CD4-positive, alpha-beta memory T cell (primary cell): ENCODE measurements at regions of chr3 and their contacts with region 1.

Region 1: GRCh38 chr3:71512000-71512399 is 71.5 kb downstream of the FOXP1 start:
- DNase-seq: peak; percentile 63 to 67 (median 65)
- H3K4me3 ChIP-seq: no peak overlapping the region
- H3K4me3 Mint-ChIP-seq: peak overlapping the region in 1 of 8 donors; percentile 35
- H3K27ac ChIP-seq: no peak overlapping the region
- H3K27ac Mint-ChIP-seq: peak overlapping the region; percentile 67 to 92 (median 85)
- H3K4me1 ChIP-seq: peaks cover 27% of the 10 kb centered on the region
- H3K4me1 Mint-ChIP-seq: peaks cover 7 to 17% (median 14%) of the 10 kb centered on the region in 4 donors
- H3K27me3 ChIP-seq: no peaks in the 10 kb centered on the region
- H3K27me3 Mint-ChIP-seq: no peaks in the 10 kb centered on the region

Region 2: DNA sequence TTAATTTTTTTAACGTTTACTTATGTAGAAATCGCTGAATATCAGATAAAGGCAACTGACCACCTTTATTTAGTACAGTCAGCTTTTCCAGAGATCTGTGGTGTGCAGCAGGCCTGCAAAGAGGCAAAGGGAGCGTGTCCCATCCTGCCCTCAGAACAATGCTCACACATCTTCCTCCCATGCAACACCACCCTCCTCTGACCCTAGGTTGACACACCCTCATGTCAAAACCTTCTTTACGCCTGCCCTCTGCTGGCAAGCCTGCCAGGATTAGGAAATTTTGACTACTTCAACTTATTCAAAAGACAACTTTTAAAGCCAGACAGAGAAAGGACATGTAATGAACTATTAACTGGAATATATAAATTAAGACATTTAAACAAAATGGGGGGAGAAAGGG is 442.2 kb before region 1 on chr3:
- CTCF ChIA-PET with region 1: interaction called, 4 read pairs
- POLR2A ChIA-PET with region 1: no interaction called
- intact Hi-C with region 1: loop called (anchors 1 kb)
- DNase-seq: peak; percentile 65 to 81 (median 68)
- H3K4me3 ChIP-seq: no peak overlapping the region
- H3K4me3 Mint-ChIP-seq: peak overlapping the region in 5 of 8 donors; percentile 6 to 63 (median 16)
- H3K27ac ChIP-seq: no peak overlapping the region
- H3K27ac Mint-ChIP-seq: peak overlapping the region in 6 of 7 donors; percentile 67 to 96 (median 80)
- H3K4me1 ChIP-seq: peaks cover 69% of the 10 kb centered on the region
- H3K4me1 Mint-ChIP-seq: peaks cover 49 to 80% (median 66%) of the 10 kb centered on the region in 4 donors
- H3K27me3 ChIP-seq: no peaks in the 10 kb centered on the region
- H3K27me3 Mint-ChIP-seq: no peaks in the 10 kb centered on the region

Region 3: DNA sequence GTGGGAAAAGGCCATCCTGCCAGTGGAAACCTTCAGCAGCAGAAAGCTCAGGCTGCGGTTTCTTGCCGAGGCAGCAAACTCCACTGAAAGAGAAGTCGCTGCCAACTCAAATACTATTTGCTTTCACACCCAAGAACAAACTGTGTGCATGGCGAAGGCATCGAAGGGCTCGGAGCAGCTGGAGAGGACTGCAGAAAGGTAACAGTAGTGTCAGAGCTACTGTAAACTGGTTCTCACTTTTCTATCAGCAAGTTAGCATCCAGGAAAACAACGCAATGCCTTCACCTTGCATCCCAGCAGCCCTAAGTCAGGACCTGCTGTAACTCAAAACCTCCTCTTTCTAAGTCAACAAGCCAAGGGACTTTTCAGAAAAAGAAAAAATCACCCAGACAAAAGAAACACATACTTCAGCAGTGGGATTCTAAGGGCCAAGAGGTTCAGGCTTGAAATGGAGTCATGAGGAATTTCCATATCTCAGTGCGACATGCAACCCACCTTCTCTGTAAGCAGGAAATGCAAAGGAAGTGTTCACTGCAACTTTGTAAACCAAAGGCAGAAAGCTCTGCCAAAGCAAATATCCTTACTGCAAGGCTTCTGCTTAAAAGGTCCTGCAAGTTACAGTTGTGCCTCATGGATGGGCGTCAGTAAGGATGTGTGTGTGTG is 122.0 kb before region 1 on chr3:
- CTCF ChIA-PET with region 1: no interaction called
- POLR2A ChIA-PET with region 1: no interaction called
- intact Hi-C with region 1: loop called (anchors 5 kb)
- DNase-seq: peak in 4 of 5 donors; percentile 6 to 43 (median 16)
- H3K4me3 ChIP-seq: peak overlapping the region in 1 of 2 donors; percentile 42
- H3K4me3 Mint-ChIP-seq: peak overlapping the region; percentile 73 to 87 (median 76)
- H3K27ac ChIP-seq: peak overlapping the region; percentile 30
- H3K27ac Mint-ChIP-seq: peak overlapping the region; percentile 74 to 96 (median 86)
- H3K4me1 ChIP-seq: peaks cover 64% of the 10 kb centered on the region
- H3K4me1 Mint-ChIP-seq: peaks cover 41 to 72% (median 55%) of the 10 kb centered on the region in 4 donors
- H3K27me3 ChIP-seq: no peaks in the 10 kb centered on the region
- H3K27me3 Mint-ChIP-seq: no peaks in the 10 kb centered on the region

Region 4: DNA sequence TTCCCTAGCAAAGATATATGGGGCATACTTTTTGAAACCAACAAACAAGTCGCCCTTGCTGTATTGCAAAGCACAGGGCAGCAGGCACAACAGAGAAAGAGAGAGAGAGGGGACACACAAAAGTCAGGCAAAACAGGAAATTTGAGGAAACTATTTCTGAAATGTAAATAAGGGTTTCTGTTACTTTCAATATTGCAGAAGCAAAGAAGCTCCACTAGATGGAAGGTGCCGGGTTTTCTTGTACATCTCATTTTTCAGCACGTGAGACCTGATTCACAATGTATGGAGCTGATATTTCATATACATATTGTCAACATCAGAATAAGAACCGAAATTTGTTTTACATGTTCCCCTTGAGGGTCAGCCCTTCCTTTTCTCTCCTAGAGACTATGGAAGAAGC is 55.8 kb before region 1 on chr3:
- CTCF ChIA-PET with region 1: interaction called, 16 read pairs
- POLR2A ChIA-PET with region 1: interaction called, 3 read pairs
- intact Hi-C with region 1: loop called (anchors 1 kb)
- DNase-seq: peak in 4 of 5 donors; percentile 40 to 47 (median 44)
- H3K4me3 ChIP-seq: peak overlapping the region; percentile 15 to 30
- H3K4me3 Mint-ChIP-seq: peak overlapping the region; percentile 59 to 91 (median 84)
- H3K27ac ChIP-seq: peak overlapping the region; percentile 67
- H3K27ac Mint-ChIP-seq: peak overlapping the region; percentile 93 to 98 (median 96)
- H3K4me1 ChIP-seq: peaks cover 89% of the 10 kb centered on the region
- H3K4me1 Mint-ChIP-seq: peaks cover 80 to 98% (median 86%) of the 10 kb centered on the region in 4 donors
- H3K27me3 ChIP-seq: no peaks in the 10 kb centered on the region
- H3K27me3 Mint-ChIP-seq: no peaks in the 10 kb centered on the region

Region 5: DNA sequence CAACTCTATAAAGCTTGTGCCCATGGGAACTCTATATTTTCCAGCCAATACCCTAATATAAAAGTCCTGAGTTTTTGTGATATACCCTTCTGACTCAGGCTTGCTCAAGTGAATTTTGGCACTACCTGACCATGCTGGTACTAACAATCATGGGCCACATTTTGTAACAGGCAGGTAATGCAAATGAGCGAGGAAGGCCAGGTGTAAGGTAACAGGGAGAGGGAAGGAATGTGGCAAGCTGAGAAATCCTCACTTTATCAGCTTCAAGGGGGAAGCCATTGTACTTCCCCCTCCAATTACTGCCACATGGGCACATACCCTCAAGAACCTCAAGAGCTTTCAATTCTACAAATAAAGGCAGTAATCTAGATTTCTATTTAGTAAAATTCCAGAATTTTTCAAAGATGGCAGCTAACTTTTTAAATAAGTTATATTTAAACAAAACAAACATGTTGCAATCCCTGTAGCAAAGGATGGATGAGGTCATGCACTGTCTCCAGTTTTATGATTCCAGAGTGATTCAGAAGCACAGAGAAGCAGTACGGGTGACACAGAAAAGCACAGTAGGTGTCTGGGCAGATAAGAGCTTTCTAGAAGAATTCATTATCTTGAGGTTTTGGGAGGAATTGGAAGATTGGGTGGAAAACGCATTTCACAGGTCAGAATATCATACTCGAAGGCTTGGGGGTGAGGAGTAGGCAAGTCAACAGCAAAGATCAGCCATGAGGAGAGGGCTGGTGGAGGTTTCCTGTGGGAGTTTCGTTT is 16.1 kb before region 1 on chr3:
- CTCF ChIA-PET with region 1: interaction called, 15 read pairs
- POLR2A ChIA-PET with region 1: interaction called, 7 read pairs
- intact Hi-C with region 1: no loop called
- DNase-seq: peak in 3 of 5 donors; percentile 27 to 64 (median 39)
- H3K4me3 ChIP-seq: peak overlapping the region; percentile 1 to 26
- H3K4me3 Mint-ChIP-seq: peak overlapping the region; percentile 72 to 89 (median 85)
- H3K27ac ChIP-seq: peak overlapping the region; percentile 50
- H3K27ac Mint-ChIP-seq: peak overlapping the region; percentile 88 to 98 (median 94)
- H3K4me1 ChIP-seq: peaks cover 82% of the 10 kb centered on the region
- H3K4me1 Mint-ChIP-seq: peaks cover 61 to 90% (median 72%) of the 10 kb centered on the region in 4 donors
- H3K27me3 ChIP-seq: no peaks in the 10 kb centered on the region
- H3K27me3 Mint-ChIP-seq: no peaks in the 10 kb centered on the region

Region 6: GRCh38 chr3:71542521-71543370 is 30.7 kb after region 1 on chr3:
- CTCF ChIA-PET with region 1: no interaction called
- POLR2A ChIA-PET with region 1: no interaction called
- intact Hi-C with region 1: no loop called
- DNase-seq: no peak
- H3K4me3 ChIP-seq: no peak overlapping the region
- H3K4me3 Mint-ChIP-seq: no peak overlapping the region
- H3K27ac ChIP-seq: no peak overlapping the region
- H3K27ac Mint-ChIP-seq: no peak overlapping the region
- H3K4me1 ChIP-seq: no peaks in the 10 kb centered on the region
- H3K4me1 Mint-ChIP-seq: peaks cover 0 to 2% (median 0%) of the 10 kb centered on the region in 4 donors
- H3K27me3 ChIP-seq: no peaks in the 10 kb centered on the region
- H3K27me3 Mint-ChIP-seq: no peaks in the 10 kb centered on the region